SK-N-SH (cell line): ENCODE measurements at regions of chr4 and their contacts with region 1.

Region 1: GRCh38 chr4:150297861-150298474 is 219.7 kb downstream of the DCLK2 start:
- DNase-seq: peak; percentile 34
- H3K4me3 ChIP-seq: no peak overlapping the region
- H3K27ac ChIP-seq: no peak overlapping the region
- H3K4me1 ChIP-seq: peaks cover 0 to 3% of the 10 kb centered on the region in 2 experiments; a peak in 1 of 4 replicates
- H3K27me3 ChIP-seq: no peaks in the 10 kb centered on the region
- CTCF ChIP-seq: peak; percentile 89
- EP300 ChIP-seq: no peak
- RAD21 ChIP-seq: peak; percentile 89

Region 2: GRCh38 chr4:150090836-150091235 is 207.1 kb before region 1 on chr4:
- CTCF ChIA-PET with region 1: no interaction called
- POLR2A ChIA-PET with region 1: no interaction called
- DNase-seq: no peak
- H3K4me3 ChIP-seq: no peak overlapping the region
- H3K27ac ChIP-seq: no peak overlapping the region
- H3K4me1 ChIP-seq: no peaks in the 10 kb centered on the region
- H3K27me3 ChIP-seq: no peaks in the 10 kb centered on the region
- CTCF ChIP-seq: no peak
- EP300 ChIP-seq: no peak
- RAD21 ChIP-seq: no peak

Region 3: GRCh38 chr4:150152766-150153165 is 145.2 kb before region 1 on chr4:
- CTCF ChIA-PET with region 1: no interaction called
- POLR2A ChIA-PET with region 1: no interaction called
- DNase-seq: no peak
- H3K4me3 ChIP-seq: no peak overlapping the region
- H3K27ac ChIP-seq: peak overlapping the region in 1 of 2 experiments; percentile 3; a peak in 1 of 4 replicates
- H3K4me1 ChIP-seq: peaks cover 10 to 14% of the 10 kb centered on the region in 2 experiments
- H3K27me3 ChIP-seq: no peaks in the 10 kb centered on the region
- CTCF ChIP-seq: no peak
- EP300 ChIP-seq: no peak
- RAD21 ChIP-seq: no peak

Region 4: DNA sequence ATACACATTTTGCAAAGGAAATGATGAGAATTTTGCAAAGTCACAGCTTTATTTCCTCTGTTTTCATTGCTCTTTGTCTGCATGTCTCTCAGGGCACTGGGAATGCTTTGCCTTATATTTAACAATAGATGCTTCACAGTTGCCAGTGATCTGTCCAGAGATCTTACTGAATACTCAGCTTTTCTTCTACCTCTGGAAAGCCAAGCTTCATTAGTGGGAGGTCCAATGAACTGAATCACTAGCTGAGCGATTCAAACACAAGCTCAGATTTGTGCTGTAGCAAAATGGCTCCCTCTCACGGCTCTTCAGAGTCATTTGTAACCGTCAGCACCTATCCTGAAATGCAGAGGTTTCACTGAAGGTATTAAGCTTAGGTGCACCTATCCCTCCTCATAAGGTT is 80.8 kb before region 1 on chr4:
- CTCF ChIA-PET with region 1: no interaction called
- POLR2A ChIA-PET with region 1: no interaction called
- DNase-seq: no peak
- H3K4me3 ChIP-seq: no peak overlapping the region
- H3K27ac ChIP-seq: peak overlapping the region; percentile 50 to 56; a peak in 3 of 4 replicates
- H3K4me1 ChIP-seq: peaks cover 0 to 17% of the 10 kb centered on the region in 2 experiments; a peak in 3 of 4 replicates
- H3K27me3 ChIP-seq: no peaks in the 10 kb centered on the region
- CTCF ChIP-seq: peak; percentile 69
- EP300 ChIP-seq: peak in 1 of 2 experiments; percentile 39; a peak in 1 of 4 replicates
- RAD21 ChIP-seq: peak; percentile 66

Region 5: DNA sequence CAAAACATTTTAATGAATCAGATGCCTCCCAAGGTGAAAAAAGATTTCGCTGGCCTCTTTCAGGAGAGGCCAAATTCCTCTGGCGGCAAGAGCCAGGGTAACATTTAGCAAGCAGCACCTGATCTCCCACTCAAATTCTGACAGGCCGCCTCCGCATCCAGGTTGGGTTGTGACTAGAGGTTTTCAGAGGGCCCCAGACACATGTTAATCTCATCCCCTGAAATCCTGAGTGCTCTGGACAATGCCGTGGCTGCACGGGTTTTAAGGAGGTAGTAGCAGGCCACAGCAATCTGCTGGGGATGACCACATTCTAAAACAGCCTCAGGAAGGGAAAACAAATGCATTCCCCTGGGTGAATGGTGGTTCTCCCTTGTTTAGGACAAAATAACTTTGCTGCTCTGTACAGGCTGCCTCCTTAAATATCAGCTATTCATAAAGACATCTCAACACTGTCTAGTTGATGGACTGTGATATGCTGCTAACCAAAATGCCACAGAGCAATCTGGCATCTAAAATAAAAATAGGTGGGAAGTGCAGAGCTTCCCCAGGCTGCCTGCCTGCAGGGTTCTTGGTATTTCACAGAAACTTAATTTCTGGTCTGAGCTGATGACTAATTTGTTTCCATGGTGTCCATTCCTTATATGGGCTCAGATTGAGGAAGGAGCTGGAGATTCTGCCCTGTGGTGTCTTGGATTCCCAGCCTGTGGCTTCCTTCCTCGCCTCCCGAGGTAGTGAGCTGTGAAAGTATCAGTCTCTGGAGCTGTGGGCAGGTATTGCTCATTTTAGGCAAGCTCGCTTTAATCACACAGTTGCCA is 17.7 kb before region 1 on chr4:
- CTCF ChIA-PET with region 1: interaction called, 14 read pairs
- POLR2A ChIA-PET with region 1: no interaction called
- DNase-seq: no peak
- H3K4me3 ChIP-seq: peak overlapping the region in 1 of 2 experiments; percentile 27; a peak in 2 of 4 replicates
- H3K27ac ChIP-seq: peak overlapping the region; percentile 45 to 83
- H3K4me1 ChIP-seq: peaks cover 14 to 22% of the 10 kb centered on the region in 2 experiments; a peak in 2 of 4 replicates
- H3K27me3 ChIP-seq: no peaks in the 10 kb centered on the region
- CTCF ChIP-seq: no peak
- EP300 ChIP-seq: no peak
- RAD21 ChIP-seq: no peak

Region 6: GRCh38 chr4:150286656-150287055 is 11.3 kb before region 1 on chr4:
- CTCF ChIA-PET with region 1: interaction called, 14 read pairs
- POLR2A ChIA-PET with region 1: no interaction called
- DNase-seq: no peak
- H3K4me3 ChIP-seq: no peak overlapping the region
- H3K27ac ChIP-seq: no peak overlapping the region
- H3K4me1 ChIP-seq: peaks cover 2 to 7% of the 10 kb centered on the region in 2 experiments; a peak in 1 of 4 replicates
- H3K27me3 ChIP-seq: no peaks in the 10 kb centered on the region
- CTCF ChIP-seq: no peak
- EP300 ChIP-seq: no peak
- RAD21 ChIP-seq: no peak